GM10248 (cell line): ENCODE measurements at regions of chr20 and their contacts with region 1.

Region 1: GRCh38 chr20:62822788-62823651 is 6.2 kb downstream of the COL9A3 start:
- DNase-seq: peak; percentile 82
- CTCF ChIP-seq: peak; percentile 85

Region 2: GRCh38 chr20:62854121-62854520 is 31.1 kb after region 1 on chr20:
- CTCF ChIA-PET with region 1: interaction called, 10 read pairs
- POLR2A ChIA-PET with region 1: no interaction called
- DNase-seq: no peak
- CTCF ChIP-seq: no peak

Region 3: GRCh38 chr20:63009045-63009961 is 186.3 kb after region 1 on chr20:
- CTCF ChIA-PET with region 1: interaction called, 14 read pairs
- POLR2A ChIA-PET with region 1: no interaction called
- DNase-seq: peak; percentile 95
- CTCF ChIP-seq: peak; percentile 99

Region 4: DNA sequence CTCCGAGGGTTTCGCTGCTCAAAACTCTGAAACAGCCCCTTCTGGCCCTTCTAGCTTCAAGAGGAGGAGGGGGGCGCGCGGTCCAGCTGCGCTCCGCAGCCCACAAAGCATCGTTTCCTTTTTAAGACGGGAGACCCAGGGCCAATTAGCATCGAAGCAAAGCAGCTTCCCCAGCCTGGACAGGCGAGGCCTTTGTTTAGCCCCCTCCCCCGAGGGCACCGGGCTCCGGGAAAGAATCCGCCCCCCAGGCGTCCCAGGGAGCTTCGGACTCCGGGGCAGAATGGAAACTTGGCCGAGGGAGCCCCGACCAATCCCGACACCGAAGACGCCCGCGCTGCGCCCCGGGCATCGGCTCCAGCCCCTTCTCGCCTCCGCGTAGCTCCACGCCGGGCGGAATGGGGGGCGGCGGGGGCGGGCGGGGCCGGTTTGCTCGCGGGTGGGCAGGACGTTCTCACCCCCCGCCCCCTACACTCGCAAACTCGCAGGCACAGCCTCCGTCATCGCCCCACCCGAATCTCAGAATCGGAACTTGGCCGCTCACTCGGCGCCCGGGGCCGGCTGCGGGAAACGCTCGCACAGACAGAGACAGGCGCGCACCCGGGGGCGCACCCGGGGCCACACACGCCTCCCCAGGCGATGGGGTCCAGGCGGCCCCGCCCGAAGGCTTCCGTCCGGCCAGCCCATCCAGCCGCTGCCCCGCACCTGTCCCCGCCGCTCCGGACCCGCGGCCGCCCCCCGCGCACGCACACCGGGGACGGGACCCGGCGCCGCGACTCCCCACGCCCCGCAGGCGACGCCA is 430.6 kb after region 1 on chr20:
- CTCF ChIA-PET with region 1: no interaction called
- POLR2A ChIA-PET with region 1: no interaction called
- DNase-seq: no peak
- CTCF ChIP-seq: no peak